ENCODE measurements at regions of chr14 and their contacts with region 1.

Region 1: DNA sequence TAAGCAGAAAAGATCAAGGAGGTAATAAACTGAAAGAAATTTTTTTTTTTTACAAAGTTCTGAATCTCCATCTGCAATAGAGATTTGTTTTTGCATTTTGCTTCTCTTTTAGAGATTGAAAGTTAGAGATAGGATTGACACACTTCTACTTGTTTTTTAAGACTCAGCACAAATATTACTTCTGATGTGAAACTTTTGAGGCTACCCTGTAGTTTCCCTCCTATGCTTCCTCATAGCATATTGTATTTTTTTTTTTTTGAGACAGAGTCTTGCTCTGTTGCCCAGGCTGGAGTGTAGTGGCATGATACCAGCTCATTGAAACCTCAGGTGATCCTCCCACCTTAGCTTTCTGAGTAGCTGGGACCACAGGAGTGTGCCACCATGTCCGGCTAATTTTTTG is 32.1 kb upstream of the SGPP1 start:
- DNase-seq: no peak
- ATAC-seq: no peak
- H3K4me3 ChIP-seq: no peak overlapping the region
- H3K27ac ChIP-seq: no peak overlapping the region
- H3K4me1 ChIP-seq: no peaks in the 10 kb centered on the region
- H3K27me3 ChIP-seq: no peaks in the 10 kb centered on the region
- CTCF ChIP-seq: no peak
- POLR2A ChIP-seq: no peak

Region 2: DNA sequence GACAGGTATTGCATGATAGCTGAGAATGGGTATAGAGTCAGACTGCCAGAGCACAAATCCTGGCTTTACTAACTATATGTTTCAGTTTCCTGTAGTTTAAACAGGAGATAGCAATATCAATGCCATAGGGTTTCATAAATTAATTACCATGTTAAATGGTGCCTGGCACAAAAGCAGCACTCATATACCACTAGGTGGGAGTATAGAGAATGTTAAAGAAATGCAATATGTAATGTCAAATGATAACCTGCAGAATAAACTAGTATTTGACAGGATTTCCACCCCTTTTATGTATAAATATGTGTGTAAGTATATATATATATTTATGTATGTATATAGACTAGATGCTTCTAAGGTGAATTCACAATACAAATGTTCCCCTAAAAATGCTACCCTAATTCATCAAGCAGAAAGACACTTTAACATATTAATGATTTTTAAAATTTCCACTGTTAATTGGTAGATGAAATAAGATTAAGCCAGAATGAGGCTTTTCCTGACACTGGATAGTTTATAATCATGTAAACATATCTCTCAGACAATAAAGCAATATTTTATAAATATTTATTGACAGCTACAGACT is 127.0 kb before region 1 on chr14:
- intact Hi-C with region 1: loop called (anchors 10 kb)
- DNase-seq: no peak
- ATAC-seq: peak; percentile 58
- H3K4me3 ChIP-seq: no peak overlapping the region
- H3K27ac ChIP-seq: no peak overlapping the region
- H3K4me1 ChIP-seq: peaks cover 9% of the 10 kb centered on the region
- H3K27me3 ChIP-seq: no peaks in the 10 kb centered on the region
- CTCF ChIP-seq: peak in 6 of 7 experiments; percentile 43 to 59 (median 48)
- POLR2A ChIP-seq: no peak